T-cell (primary cell): ENCODE measurements at regions of chr2 and their contacts with region 1.

Region 1: GRCh38 chr2:210997373-210997772 is 441.0 kb downstream of the CPS1 start:
- DNase-seq: no peak
- ATAC-seq: no peak
- H3K4me3 ChIP-seq: no peak overlapping the region
- H3K4me3 Mint-ChIP-seq: no peak overlapping the region
- H3K27ac ChIP-seq: no peak overlapping the region
- H3K27ac Mint-ChIP-seq: no peak overlapping the region
- H3K4me1 ChIP-seq: no peaks in the 10 kb centered on the region
- H3K4me1 Mint-ChIP-seq: no peaks in the 10 kb centered on the region
- H3K27me3 ChIP-seq: no peaks in the 10 kb centered on the region
- H3K27me3 Mint-ChIP-seq: no peaks in the 10 kb centered on the region

Region 2: DNA sequence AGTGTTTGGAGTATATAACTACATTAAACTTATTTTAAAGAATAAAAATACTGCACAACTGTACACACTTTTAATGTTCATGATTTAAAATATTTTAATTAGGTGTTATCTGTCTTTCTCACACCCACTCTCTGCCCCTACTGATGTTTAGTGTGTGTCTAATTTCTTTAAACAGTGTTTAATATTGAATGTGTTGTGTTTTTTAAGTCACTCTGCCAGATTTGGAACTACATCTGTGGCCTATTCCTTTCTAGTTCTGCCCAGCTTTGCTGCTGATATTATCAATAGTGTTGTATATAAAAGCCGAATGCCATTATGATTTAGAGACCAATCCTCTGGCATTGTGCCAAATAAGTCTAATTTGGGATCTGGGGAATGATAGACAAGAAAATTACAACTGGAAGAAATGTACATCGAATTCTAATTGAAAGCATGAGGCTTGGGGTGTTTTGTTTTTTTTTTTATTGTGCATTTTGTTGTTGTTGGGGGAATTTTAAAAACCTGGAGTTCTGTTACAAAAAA is 42.9 kb before region 1 on chr2:
- CTCF ChIA-PET with region 1: no interaction called
- POLR2A ChIA-PET with region 1: interaction called in 1 of 2 experiments, 12 read pairs
- DNase-seq: no peak
- ATAC-seq: no peak
- H3K4me3 ChIP-seq: no peak overlapping the region
- H3K4me3 Mint-ChIP-seq: no peak overlapping the region
- H3K27ac ChIP-seq: no peak overlapping the region
- H3K27ac Mint-ChIP-seq: no peak overlapping the region
- H3K4me1 ChIP-seq: no peaks in the 10 kb centered on the region
- H3K4me1 Mint-ChIP-seq: no peaks in the 10 kb centered on the region
- H3K27me3 ChIP-seq: no peaks in the 10 kb centered on the region
- H3K27me3 Mint-ChIP-seq: no peaks in the 10 kb centered on the region

Region 3: GRCh38 chr2:211014376-211014775 is 17.0 kb after region 1 on chr2:
- CTCF ChIA-PET with region 1: no interaction called
- POLR2A ChIA-PET with region 1: no interaction called
- DNase-seq: no peak
- ATAC-seq: no peak
- H3K4me3 ChIP-seq: no peak overlapping the region
- H3K4me3 Mint-ChIP-seq: no peak overlapping the region
- H3K27ac ChIP-seq: no peak overlapping the region
- H3K27ac Mint-ChIP-seq: no peak overlapping the region
- H3K4me1 ChIP-seq: no peaks in the 10 kb centered on the region
- H3K4me1 Mint-ChIP-seq: no peaks in the 10 kb centered on the region
- H3K27me3 ChIP-seq: no peaks in the 10 kb centered on the region
- H3K27me3 Mint-ChIP-seq: no peaks in the 10 kb centered on the region